Esophagus muscularis mucosa (tissue), 4 donors: ENCODE measurements at regions of chr12 and their contacts with region 1.

Region 1: DNA sequence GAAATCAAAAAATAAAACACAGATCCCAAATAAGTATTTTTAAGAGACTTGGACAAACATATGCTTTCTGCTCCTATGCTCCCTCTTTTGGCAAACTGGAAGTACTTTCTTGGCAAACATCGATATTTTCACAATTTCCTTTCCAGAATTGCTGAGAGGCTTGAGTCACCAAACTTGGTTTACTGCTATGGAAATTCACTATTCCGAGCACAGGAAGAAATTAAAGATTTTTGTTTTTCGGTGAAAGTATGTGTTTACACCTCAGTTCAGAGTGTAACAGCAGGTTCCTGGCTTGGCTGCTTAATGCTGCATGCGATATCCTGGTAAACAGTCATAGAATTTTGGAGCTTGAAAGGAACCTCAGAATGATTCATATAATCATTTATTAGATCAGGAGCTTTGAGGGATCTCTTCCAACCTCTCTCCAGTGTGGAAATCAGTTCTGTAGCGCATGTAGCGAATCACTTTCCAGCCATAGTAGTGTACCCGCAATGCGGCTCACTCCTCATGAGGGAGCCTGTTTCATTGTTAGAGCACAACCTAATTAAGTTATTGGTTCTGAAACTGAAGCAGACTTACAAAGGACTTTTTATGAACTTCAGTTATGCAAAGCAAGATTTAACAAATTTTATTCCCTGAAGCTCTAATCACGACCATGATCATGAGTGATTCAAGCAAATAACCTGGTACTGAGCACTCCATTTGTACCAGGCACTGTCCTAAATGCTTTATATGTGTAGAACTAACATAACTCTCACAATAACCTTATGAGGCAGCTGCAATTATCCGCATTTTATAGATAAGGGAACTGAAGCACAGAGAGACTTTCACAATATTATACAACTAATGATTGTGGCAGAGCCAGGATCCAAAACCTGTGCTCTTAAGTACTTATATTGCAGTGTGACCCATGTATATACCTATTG is 56.4 kb upstream of the ATP2A2 start:
- DNase-seq: no peak
- H3K4me3 ChIP-seq: peak overlapping the region; percentile 8 to 45 (median 41)
- H3K27ac ChIP-seq: peak overlapping the region; percentile 74 to 82 (median 78)
- H3K4me1 ChIP-seq: peaks cover 23 to 48% (median 46%) of the 10 kb centered on the region in 4 donors
- H3K27me3 ChIP-seq: no peaks in the 10 kb centered on the region
- CTCF ChIP-seq: peak; percentile 51 to 71 (median 62)
- EP300 ChIP-seq: no peak
- POLR2A ChIP-seq: no peak

Region 2: DNA sequence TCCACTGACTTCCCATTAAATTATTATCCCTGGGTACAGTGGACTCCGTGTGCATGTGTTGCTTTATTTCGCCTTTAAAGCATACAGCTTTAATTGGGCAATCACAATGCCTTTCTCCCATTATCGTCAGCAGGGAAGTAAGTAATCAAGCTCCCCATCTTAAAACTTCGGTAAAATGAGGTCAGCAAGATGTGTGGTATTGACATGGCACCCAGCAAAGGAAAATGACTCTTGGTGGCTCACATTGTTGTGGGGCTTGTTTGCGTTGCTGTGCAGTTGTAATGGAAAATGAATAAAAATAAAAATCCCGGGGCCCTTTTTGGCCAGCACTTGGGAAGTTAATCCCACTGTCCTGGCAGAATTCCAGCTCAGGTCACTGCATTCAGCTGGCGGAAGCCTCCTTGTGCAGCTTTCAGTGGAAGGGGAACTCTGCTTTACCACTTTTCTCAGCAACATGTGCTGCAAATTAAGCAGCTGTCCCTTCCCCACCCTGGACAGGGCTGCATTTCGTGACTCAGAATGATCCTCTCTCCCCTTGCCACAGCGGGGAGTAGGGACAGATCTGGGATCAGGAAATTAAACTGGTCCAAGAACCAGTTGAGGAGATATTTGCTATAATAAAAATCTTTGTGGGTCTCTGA is 42.5 kb after region 1 on chr12:
- intact Hi-C with region 1: loop called (anchors 5 kb)
- DNase-seq: no peak
- H3K4me3 ChIP-seq: peak overlapping the region in 2 of 4 donors; percentile 8 to 21
- H3K27ac ChIP-seq: peak overlapping the region; percentile 62 to 76 (median 64)
- H3K4me1 ChIP-seq: peaks cover 45 to 59% (median 55%) of the 10 kb centered on the region in 4 donors
- H3K27me3 ChIP-seq: no peaks in the 10 kb centered on the region
- CTCF ChIP-seq: no peak
- EP300 ChIP-seq: no peak
- POLR2A ChIP-seq: no peak

Region 3: DNA sequence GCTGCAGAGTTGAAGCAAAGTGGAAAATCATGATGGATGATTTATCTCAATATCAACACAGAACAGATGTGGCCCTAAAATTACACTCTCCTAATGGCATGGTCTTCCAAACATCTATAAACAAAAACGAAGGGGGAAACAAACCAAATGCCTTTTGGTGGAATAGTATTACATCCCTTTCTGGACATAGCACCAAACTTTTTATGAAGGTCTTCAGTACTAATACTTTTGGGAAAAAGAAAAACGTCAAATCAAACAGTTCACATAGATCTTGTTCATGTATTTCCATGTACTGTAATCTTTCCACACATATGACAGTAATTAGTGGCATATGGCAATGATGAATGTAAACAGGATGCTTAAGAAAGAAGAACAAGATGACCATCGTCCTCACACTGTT is 201.8 kb after region 1 on chr12:
- intact Hi-C with region 1: loop called (anchors 10 kb)
- DNase-seq: no peak
- H3K4me3 ChIP-seq: no peak overlapping the region
- H3K27ac ChIP-seq: peak overlapping the region in 2 of 4 donors; percentile 41 to 46
- H3K4me1 ChIP-seq: peaks cover 0 to 11% (median 4%) of the 10 kb centered on the region in 4 donors
- H3K27me3 ChIP-seq: no peaks in the 10 kb centered on the region
- CTCF ChIP-seq: no peak
- EP300 ChIP-seq: no peak
- POLR2A ChIP-seq: no peak